ENCODE measurements at regions of chr14 and their contacts with region 1.

Region 1: DNA sequence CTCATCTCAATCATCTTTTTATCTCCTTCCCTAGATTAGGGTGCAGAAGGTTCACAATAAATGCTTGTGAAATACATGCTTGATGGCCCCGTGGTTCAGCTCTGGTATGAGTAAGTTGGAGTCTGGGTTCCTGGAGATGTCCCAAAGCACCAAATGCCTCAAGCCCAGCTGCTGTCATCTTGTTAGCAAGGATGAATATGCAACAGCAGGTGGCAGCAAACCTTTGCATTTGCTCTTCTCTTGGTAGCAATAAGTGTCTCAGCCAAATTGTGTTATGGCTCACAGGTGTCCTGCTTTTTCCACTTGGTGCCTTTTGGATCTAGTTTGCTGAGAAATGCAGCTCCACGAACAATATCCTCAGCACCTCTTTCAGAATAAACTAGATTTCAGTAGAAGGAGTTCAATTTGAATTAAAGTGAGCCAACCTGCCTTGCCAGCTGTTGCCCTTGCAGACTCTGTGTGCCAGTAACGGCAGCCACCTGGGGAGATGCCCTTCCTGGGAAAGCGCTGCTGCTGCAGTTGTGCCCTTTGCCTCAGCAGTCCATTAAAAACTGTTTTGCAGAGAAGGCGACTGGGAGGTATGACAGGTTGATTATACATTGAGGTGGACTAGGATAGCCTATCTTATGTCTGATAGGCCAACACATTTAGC is 417.3 kb downstream of the SNAPC1 start:
- DNase-seq: peak; percentile 66
- H3K4me3 ChIP-seq: no peak overlapping the region
- H3K27ac ChIP-seq: no peak overlapping the region
- H3K4me1 ChIP-seq: no peaks in the 10 kb centered on the region
- H3K27me3 ChIP-seq: no peaks in the 10 kb centered on the region
- CTCF ChIP-seq: peak; percentile 67 to 81

Region 2: DNA sequence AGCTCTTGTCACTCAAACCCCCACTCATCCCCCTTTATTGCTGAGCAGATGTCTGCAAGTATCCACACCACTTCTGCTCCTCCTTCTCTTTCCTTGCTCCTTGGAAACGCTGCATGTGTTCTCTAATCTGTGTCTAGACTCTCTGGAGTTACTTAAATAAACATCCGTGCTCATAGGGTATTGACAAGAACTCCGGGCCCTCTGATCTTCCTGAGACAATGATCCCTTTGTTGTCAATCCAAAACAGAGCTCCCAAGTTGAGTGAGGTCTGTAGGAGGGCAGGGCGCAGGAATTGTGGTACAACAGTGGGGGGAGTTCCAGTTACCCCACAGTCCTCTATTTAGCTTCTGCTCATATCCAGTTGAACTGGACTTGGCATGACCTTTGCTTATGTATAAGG is 71.7 kb after region 1 on chr14:
- CTCF ChIA-PET with region 1: no interaction called
- dilution Hi-C with region 1: no loop called
- in situ Hi-C with region 1: no loop called
- intact Hi-C with region 1: no loop called
- DNase-seq: no peak
- H3K4me3 ChIP-seq: no peak overlapping the region
- H3K27ac ChIP-seq: no peak overlapping the region
- H3K4me1 ChIP-seq: no peaks in the 10 kb centered on the region
- H3K27me3 ChIP-seq: no peaks in the 10 kb centered on the region
- CTCF ChIP-seq: no peak

Region 3: DNA sequence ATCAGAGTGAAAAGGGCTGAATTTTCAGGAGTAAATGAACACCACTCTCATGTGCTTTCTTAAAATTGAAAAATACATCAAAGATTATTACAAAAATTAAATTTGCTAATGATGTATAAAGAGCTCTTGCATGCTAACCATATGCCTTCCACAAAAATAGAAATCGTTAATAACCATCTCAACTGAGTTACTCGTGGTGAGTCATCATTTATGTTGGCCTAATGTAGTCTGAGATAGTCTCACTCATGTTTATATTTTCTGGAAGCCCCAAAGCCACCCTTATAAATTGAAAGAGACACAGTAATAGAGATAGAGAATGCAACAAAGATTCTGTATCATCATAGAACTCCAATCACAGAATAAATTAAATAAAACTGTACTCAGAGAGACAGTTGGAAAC is 734.5 kb after region 1 on chr14:
- CTCF ChIA-PET with region 1: no interaction called
- dilution Hi-C with region 1: no loop called
- in situ Hi-C with region 1: no loop called
- intact Hi-C with region 1: no loop called
- DNase-seq: peak; percentile 36
- H3K4me3 ChIP-seq: no peak overlapping the region
- H3K27ac ChIP-seq: no peak overlapping the region
- H3K4me1 ChIP-seq: no peaks in the 10 kb centered on the region
- H3K27me3 ChIP-seq: no peaks in the 10 kb centered on the region
- CTCF ChIP-seq: no peak

Region 4: GRCh38 chr14:63032076-63032475 is 852.6 kb after region 1 on chr14:
- CTCF ChIA-PET with region 1: no interaction called
- dilution Hi-C with region 1: no loop called
- in situ Hi-C with region 1: loop called in 1 of 2 experiments (anchors 5 kb)
- intact Hi-C with region 1: no loop called
- DNase-seq: no peak
- H3K4me3 ChIP-seq: no peak overlapping the region
- H3K27ac ChIP-seq: no peak overlapping the region
- H3K4me1 ChIP-seq: no peaks in the 10 kb centered on the region
- H3K27me3 ChIP-seq: no peaks in the 10 kb centered on the region
- CTCF ChIP-seq: no peak

Region 5: DNA sequence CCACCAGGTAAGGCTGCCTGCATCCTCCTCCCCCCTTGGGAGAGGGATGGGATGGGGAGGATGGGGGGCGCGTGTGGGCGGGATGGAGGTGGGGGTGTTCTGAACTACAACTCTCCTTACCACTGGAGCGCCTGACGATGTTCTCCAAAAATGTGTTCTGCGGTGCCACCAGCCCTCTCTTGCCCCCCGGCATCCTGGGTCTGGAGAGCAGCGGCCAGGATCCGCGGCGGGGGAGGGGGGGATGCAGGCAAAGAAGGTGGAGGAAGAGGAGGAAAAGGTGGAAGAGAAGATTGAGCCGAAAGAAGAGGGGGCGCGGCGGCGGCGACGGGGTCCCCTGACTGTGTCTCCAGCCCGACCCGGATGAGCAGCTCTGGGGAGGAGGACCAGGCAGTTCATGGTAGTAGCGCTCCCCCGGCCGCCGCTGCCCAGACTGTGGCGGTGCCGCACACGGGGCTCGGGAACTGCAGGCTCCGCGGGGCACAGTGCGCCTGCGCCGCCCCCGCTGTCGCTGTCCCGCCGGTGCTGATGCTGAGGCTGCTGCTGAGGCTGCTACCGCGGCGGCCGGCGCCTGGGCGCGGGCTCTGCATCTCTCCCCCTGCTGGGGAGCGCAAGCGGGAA is 865.6 kb after region 1 on chr14 and contains the start of gene KCNH5:
- CTCF ChIA-PET with region 1: no interaction called
- dilution Hi-C with region 1: no loop called
- in situ Hi-C with region 1: loop called in 1 of 2 experiments (anchors 10 kb)
- intact Hi-C with region 1: loop called (anchors 1 kb)
- DNase-seq: peak; percentile 53
- H3K4me3 ChIP-seq: peak within 1 kb of the TSS; percentile 18 to 41 (median 35)
- H3K27ac ChIP-seq: no peak within 1 kb of the TSS
- H3K4me1 ChIP-seq: peaks cover 13% of the 10 kb centered on the region
- H3K27me3 ChIP-seq: peaks cover 22% of the 10 kb centered on the region
- CTCF ChIP-seq: no peak
- total RNA-seq, gene KCNH5: not detected

Region 6: DNA sequence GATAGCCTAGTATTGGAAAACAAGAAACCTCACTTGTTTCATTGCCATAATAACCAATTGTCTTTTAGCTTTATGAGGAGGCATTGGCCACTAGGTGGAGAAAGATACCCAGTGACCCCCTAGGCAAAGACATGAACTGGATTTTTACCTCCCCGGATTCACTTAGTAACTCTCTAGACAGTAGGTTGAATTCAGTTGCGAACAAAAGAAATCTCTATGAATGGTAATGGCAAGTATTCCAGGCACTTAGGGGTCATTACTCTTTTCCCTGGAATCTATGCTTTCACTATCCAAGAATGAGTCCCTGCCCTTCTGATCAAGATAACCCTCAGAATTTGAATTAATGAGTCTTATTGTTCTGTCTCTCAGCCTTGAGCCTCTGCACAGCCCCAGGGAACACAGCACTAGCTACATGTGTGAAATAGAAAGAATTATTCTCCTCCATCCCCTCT is 995.3 kb after region 1 on chr14:
- CTCF ChIA-PET with region 1: interaction called, 6 read pairs
- dilution Hi-C with region 1: no loop called
- in situ Hi-C with region 1: no loop called
- intact Hi-C with region 1: loop called (anchors 1 kb)
- DNase-seq: peak; percentile 91
- H3K4me3 ChIP-seq: no peak overlapping the region
- H3K27ac ChIP-seq: peak overlapping the region; percentile 19
- H3K4me1 ChIP-seq: peaks cover 36% of the 10 kb centered on the region
- H3K27me3 ChIP-seq: no peaks in the 10 kb centered on the region
- CTCF ChIP-seq: peak; percentile 76 to 79